ENCODE measurements at regions of chr5 and their contacts with region 1.

Region 1: DNA sequence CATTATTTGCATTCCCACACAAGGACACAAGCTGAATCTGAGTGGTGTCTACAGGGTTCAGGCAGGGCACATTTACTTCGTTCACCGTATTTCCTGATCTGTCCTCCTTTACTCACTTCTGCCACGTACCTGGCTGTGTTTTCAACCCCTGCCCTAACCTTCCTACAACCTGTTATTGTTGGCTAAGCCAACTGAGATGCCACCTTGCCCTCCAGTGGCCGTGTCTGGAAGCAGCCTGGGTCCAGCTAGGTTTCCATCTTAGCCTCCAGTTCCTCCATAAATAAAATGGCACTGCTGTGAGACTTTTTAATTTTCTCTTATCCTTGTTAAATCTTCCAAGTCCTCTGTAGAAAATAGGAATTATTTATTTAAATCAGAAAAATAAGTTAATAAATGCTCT is 64.8 kb downstream of the ATP10B start:
- DNase-seq: peak; percentile 20
- ATAC-seq: no peak
- H3K4me3 ChIP-seq: no peak overlapping the region
- H3K27ac ChIP-seq: no peak overlapping the region
- H3K4me1 ChIP-seq: no peaks in the 10 kb centered on the region
- H3K27me3 ChIP-seq: no peaks in the 10 kb centered on the region
- CTCF ChIP-seq: peak; percentile 48

Region 2: GRCh38 chr5:160508780-160509361 is 278.4 kb before region 1 on chr5:
- CTCF ChIA-PET with region 1: no interaction called
- POLR2A ChIA-PET with region 1: no interaction called
- intact Hi-C with region 1: loop called (anchors 5 kb)
- DNase-seq: peak; percentile 91
- ATAC-seq: peak; percentile 93
- H3K4me3 ChIP-seq: no peak overlapping the region
- H3K27ac ChIP-seq: no peak overlapping the region
- H3K4me1 ChIP-seq: no peaks in the 10 kb centered on the region
- H3K27me3 ChIP-seq: peaks cover 25% of the 10 kb centered on the region; the same call in 1 of the 2 replicates
- CTCF ChIP-seq: peak; percentile 94